ENCODE measurements at regions of chr16 and their contacts with region 1.

Region 1: GRCh38 chr16:11155284-11155806 is 100.7 kb downstream of the SOCS1 start:
- DNase-seq: peak; percentile 55
- ATAC-seq: peak; percentile 96
- H3K4me3 Mint-ChIP-seq: no peak overlapping the region
- H3K27ac Mint-ChIP-seq: no peak overlapping the region
- H3K4me1 Mint-ChIP-seq: peaks cover 34% of the 10 kb centered on the region
- H3K27me3 Mint-ChIP-seq: no peaks in the 10 kb centered on the region

Region 2: DNA sequence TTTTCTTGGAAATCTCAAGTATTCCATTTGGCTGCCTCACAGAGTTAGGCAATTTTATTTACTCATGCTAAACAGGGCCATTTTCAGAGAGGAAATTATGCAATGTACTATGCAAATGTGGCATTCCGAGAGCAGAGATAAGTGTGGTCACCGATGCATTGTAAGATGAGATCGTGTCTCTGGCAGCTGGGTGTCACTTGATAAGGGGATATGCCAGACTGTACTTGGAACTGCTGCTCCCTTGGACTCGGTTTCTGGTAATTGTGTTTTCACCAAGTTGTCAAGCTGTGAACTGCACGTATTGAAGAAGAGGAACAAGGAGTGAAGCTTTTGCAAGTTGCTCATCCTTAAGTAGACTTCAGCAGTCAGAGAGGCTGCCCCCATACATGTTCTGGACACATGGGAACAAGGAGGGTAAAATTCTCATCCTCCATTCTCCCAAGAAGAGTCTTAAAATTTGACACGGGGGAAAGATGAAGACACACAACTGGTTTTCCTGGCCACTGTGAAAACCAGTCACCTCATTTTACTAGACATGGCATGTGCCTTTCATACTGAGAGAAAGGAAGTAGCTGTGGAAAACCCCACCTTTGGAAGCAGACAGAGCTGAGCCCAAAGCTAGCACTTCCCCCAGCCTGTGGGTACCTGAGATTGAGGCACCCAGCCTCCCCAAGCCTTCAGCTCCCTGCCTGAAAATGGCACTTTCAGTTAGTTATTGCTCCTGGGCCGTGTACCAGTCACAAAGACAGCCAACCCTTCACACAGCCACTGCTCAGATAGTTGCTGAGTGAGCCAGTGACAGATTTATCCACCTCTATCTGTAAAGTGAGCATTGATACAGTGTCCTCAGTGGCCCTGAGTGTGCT is 50.1 kb before region 1 on chr16:
- CTCF ChIA-PET with region 1: interaction called, 3 read pairs
- POLR2A ChIA-PET with region 1: no interaction called
- intact Hi-C with region 1: loop called in 1 of 2 experiments (anchors 5 kb)
- DNase-seq: peak; percentile 61
- ATAC-seq: peak; percentile 67
- H3K4me3 Mint-ChIP-seq: peak overlapping the region; percentile 18
- H3K27ac Mint-ChIP-seq: peak overlapping the region; percentile 88
- H3K4me1 Mint-ChIP-seq: peaks cover 61% of the 10 kb centered on the region
- H3K27me3 Mint-ChIP-seq: no peaks in the 10 kb centered on the region

Region 3: GRCh38 chr16:11121914-11122692 is 33.2 kb before region 1 on chr16:
- CTCF ChIA-PET with region 1: no interaction called
- POLR2A ChIA-PET with region 1: no interaction called
- intact Hi-C with region 1: loop called in 1 of 2 experiments (anchors 5 kb)
- DNase-seq: no peak
- ATAC-seq: no peak
- H3K4me3 Mint-ChIP-seq: no peak overlapping the region
- H3K27ac Mint-ChIP-seq: peak overlapping the region; percentile 38
- H3K4me1 Mint-ChIP-seq: peaks cover 17% of the 10 kb centered on the region
- H3K27me3 Mint-ChIP-seq: no peaks in the 10 kb centered on the region

Region 4: DNA sequence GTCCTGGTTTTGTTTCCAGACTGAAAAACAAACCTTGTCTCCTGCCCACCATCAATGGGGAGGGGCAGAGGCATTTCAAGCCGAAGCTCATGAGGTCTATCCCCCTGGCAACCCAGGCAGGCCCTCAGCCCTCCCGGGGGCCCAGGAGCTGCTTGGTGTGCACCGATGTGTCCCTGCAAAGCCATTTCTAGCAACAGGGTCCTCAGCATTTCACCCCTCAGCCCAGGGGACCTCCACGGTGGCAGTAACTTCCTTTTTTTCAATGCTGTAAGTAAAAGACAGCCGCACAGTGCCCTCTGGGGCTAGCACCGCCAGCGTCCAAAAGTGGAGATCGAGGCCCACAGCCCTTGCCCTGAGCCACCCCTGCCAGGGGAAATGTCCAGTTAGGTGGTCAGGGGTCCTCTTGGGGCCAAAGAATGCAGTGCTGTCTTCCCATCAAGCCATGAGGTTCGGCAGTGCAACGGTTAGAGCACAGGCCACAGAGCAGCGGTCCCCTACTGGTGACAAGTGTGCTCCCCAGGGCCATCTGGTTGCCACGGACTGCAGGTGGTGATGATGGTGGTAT is 351.5 kb after region 1 on chr16:
- CTCF ChIA-PET with region 1: no interaction called
- POLR2A ChIA-PET with region 1: no interaction called
- intact Hi-C with region 1: no loop called
- DNase-seq: no peak
- ATAC-seq: no peak
- H3K4me3 Mint-ChIP-seq: no peak overlapping the region
- H3K27ac Mint-ChIP-seq: no peak overlapping the region
- H3K4me1 Mint-ChIP-seq: no peaks in the 10 kb centered on the region
- H3K27me3 Mint-ChIP-seq: no peaks in the 10 kb centered on the region